ENCODE measurements at regions of chr5 and their contacts with region 1.

Region 1: DNA sequence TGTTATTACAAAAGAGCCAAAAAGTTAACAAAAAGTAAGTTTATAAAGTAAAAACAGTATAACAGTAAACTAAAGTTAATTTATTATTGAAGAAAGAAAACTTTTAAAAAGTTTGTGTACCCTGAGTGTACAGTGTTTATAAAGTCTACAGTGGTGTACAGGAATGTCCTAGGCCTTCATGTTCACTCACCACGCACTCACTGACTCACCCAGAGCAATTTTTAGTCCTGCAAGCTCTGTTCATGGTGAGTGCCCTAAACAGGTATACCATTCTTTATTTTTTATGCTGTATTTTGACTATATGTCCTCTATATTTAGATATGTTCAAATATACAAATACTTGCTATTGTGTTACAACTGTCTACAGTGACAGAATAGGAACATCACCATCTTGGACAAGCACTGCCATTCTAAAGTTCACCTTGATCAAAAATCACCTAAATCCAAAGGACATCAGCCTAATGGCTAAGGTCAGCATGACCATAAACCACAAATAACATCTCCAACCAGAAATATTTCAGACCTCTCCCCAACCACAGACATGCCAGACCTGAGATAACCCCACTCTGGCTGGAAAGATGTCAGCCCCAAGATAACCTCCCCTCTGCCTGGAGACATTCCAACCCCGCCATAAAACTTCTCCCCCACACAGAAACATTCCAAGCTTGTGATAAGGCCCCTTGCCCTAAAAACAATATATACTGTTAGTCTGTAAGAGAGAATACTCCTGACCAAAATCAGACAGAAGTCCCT is 56.1 kb downstream of the AGXT2 start:
- DNase-seq: no peak
- H3K4me3 ChIP-seq: no peak overlapping the region
- H3K4me3 Mint-ChIP-seq: no peak overlapping the region
- H3K27ac ChIP-seq: no peak overlapping the region
- H3K27ac Mint-ChIP-seq: no peak overlapping the region
- H3K4me1 ChIP-seq: no peaks in the 10 kb centered on the region
- H3K4me1 Mint-ChIP-seq: no peaks in the 10 kb centered on the region
- H3K27me3 ChIP-seq: no peaks in the 10 kb centered on the region
- H3K27me3 Mint-ChIP-seq: peaks cover 18 to 54% of the 10 kb centered on the region in 2 donors

Region 2: GRCh38 chr5:34959323-34959722 is 32.3 kb before region 1 on chr5:
- CTCF ChIA-PET with region 1: no interaction called
- POLR2A ChIA-PET with region 1: no interaction called
- DNase-seq: no peak
- H3K4me3 ChIP-seq: no peak overlapping the region
- H3K4me3 Mint-ChIP-seq: no peak overlapping the region
- H3K27ac ChIP-seq: no peak overlapping the region
- H3K27ac Mint-ChIP-seq: peak overlapping the region in 5 of 8 donors; percentile 7 to 73 (median 22)
- H3K4me1 ChIP-seq: no peaks in the 10 kb centered on the region
- H3K4me1 Mint-ChIP-seq: peaks cover 1 to 6% (median 6%) of the 10 kb centered on the region in 3 donors
- H3K27me3 ChIP-seq: no peaks in the 10 kb centered on the region
- H3K27me3 Mint-ChIP-seq: no peaks in the 10 kb centered on the region

Region 3: GRCh38 chr5:34977934-34978613 is 13.6 kb before region 1 on chr5:
- CTCF ChIA-PET with region 1: no interaction called
- POLR2A ChIA-PET with region 1: no interaction called
- DNase-seq: no peak
- H3K4me3 ChIP-seq: no peak overlapping the region
- H3K4me3 Mint-ChIP-seq: no peak overlapping the region
- H3K27ac ChIP-seq: no peak overlapping the region
- H3K27ac Mint-ChIP-seq: no peak overlapping the region
- H3K4me1 ChIP-seq: no peaks in the 10 kb centered on the region
- H3K4me1 Mint-ChIP-seq: no peaks in the 10 kb centered on the region
- H3K27me3 ChIP-seq: no peaks in the 10 kb centered on the region
- H3K27me3 Mint-ChIP-seq: peaks cover 5 to 13% of the 10 kb centered on the region in 2 donors

Region 4: GRCh38 chr5:35003018-35003957 is 11.6 kb after region 1 on chr5:
- CTCF ChIA-PET with region 1: interaction called, 11 read pairs
- POLR2A ChIA-PET with region 1: no interaction called
- DNase-seq: peak in 4 of 5 donors; percentile 8 to 29 (median 18)
- H3K4me3 ChIP-seq: no peak overlapping the region
- H3K4me3 Mint-ChIP-seq: no peak overlapping the region
- H3K27ac ChIP-seq: no peak overlapping the region
- H3K27ac Mint-ChIP-seq: peak overlapping the region in 1 of 8 donors; percentile 35
- H3K4me1 ChIP-seq: no peaks in the 10 kb centered on the region
- H3K4me1 Mint-ChIP-seq: peaks cover 0 to 3% (median 0%) of the 10 kb centered on the region in 3 donors
- H3K27me3 ChIP-seq: peaks cover 4% of the 10 kb centered on the region
- H3K27me3 Mint-ChIP-seq: peaks cover 11 to 44% of the 10 kb centered on the region in 2 donors